ENCODE measurements at regions of chr7 and their contacts with region 1.

Region 1: DNA sequence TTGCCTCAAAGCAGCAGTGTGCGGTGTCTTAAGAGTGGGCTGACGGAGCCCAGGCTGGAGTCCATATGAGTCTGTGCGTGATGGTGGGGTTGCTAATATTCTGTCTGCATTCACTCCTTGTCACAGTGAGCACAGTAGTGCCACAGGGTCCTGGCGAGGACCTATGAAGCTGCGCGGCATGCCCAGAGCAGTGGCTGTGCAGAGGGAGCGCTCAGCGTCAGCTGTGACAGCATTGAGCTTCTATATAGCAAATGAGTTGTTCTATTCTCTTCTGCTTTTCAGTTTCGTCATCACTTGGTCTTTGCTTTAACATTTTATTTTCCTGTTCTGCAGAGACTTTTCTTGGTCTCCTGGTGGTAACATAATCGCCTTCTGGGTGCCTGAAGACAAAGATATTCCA is 14.5 kb downstream of the EIF3B start:
- DNase-seq: no peak
- ATAC-seq: no peak
- H3K4me3 Mint-ChIP-seq: no peak overlapping the region
- H3K27ac Mint-ChIP-seq: no peak overlapping the region
- H3K4me1 Mint-ChIP-seq: no peaks in the 10 kb centered on the region
- H3K27me3 Mint-ChIP-seq: no peaks in the 10 kb centered on the region
- CTCF ChIP-seq: no peak

Region 2: GRCh38 chr7:2241580-2242540 is 127.3 kb before region 1 on chr7 and contains the starts of genes MRM2 and NUDT1:
- CTCF ChIA-PET with region 1: no interaction called
- POLR2A ChIA-PET with region 1: interaction called, 10 read pairs
- DNase-seq: peak; percentile 87
- ATAC-seq: peak; percentile 79
- H3K4me3 Mint-ChIP-seq: peak within 1 kb of the TSS; percentile 87
- H3K27ac Mint-ChIP-seq: peak within 1 kb of the TSS; percentile 75; the same call in 1 of the 2 replicates
- H3K4me1 Mint-ChIP-seq: peaks cover 13% of the 10 kb centered on the region
- H3K27me3 Mint-ChIP-seq: no peaks in the 10 kb centered on the region
- CTCF ChIP-seq: no peak
- total RNA-seq, gene MRM2: 33.6 to 38.9 TPM (median 34.7 TPM) in 3 replicates
- total RNA-seq, gene NUDT1: 100 to 108 TPM (median 102 TPM) in 3 replicates

Measured in WTC11 (cell line).